SK-MEL-5 (cell line): ENCODE measurements at regions of chr17 and their contacts with region 1.

Region 1: DNA sequence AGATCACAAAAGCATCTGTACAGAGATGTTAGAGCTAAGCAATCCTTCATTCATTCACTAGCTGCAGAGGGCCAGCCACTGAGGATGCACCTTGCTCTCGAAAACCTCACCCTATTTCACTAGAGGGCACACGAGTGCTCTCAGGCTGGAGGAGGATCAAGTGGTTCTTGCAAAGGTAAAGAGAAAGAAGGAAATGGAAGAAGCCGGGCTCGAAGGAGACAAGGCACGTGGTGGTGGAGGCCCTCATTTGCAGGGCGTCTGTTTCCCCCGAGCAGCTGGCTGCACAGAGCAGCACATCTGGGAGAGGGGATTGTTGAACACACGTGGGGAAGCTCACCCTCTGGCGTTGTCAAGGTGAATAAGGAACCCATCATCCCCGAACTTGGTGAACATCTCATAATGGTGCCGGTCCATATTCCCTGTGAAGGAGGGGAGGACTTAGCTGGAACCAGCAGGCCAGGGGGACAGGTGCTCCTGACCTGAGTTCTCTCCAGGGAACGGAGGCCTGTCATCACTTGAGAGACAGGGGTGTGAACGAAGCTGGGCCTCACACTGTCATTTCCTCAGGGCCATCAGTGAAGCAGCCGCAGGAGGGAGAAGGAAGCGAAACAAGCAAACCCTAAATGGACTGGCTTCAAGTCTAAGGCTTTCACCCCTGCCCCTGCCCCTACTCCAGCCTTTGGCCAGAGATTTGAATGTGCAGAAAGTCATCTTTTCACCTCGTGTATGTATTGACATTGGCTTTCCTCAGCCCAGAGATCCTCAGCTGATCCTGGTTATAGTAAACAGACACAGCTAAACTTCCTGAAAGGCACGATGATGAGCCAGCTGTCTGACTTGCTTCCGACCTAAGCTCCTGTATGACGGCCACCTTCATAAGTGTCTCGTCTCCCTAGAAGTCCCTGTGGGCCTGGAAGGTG is 27.6 kb downstream of the PRKAR1A start:
- DNase-seq: peak; percentile 57

Region 2: DNA sequence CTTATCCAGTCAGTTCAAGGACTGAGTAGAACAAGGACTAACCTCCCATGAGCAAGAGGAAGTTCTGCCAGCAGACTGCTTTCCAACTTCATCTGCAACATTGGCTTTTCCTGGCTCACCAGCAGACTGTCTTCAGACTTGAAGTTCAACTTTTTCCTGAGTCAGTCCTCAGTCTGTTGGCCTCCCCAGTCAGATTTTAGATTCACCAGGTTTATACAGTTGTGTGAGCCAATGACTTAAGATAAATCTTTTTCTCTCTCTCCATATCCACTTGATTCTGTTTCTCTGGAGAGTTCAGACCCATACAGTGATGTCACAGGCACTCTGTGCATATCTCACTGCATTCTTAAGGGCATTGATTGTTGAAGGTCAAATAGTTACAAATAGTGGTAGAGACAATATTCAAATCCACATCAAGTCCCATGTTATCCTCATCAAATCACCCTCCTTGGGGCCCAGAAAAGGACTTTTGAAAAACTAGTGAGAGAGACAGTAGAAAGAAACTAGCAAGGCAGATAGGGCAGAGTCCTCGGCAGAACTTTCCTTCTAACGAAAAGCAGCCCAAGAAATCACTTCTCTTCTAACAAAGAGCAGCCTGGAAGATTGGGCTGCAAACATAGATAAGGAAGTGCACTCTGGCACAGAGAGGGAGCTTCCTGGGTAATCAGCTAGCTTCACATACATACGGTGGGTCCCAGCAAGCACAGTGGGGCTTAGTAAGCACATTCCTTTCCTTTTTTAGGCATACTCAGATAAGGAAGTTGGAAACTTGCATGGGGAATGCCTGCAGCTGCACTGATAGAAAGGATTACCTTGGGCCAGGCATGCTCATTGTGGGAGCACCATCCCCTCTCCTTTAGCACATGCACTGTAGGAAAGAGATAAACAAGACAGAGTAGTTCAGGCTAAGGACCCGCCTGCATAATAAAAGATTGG is 193.7 kb after region 1 on chr17:
- in situ Hi-C with region 1: loop called (anchors 25 kb)
- DNase-seq: no peak